ENCODE measurements at regions of chr1 and their contacts with region 1.

Region 1: GRCh38 chr1:152047730-152048402 is 11.1 kb upstream of the S100A11 start:
- DNase-seq: peak; percentile 99
- H3K4me3 ChIP-seq: peak overlapping the region; percentile 6 to 37 (median 25)
- H3K27ac ChIP-seq: peak overlapping the region; percentile 98
- H3K4me1 ChIP-seq: peaks cover 74% of the 10 kb centered on the region
- H3K27me3 ChIP-seq: no peaks in the 10 kb centered on the region
- CTCF ChIP-seq: peak; percentile 27 to 46

Region 2: GRCh38 chr1:151993654-151994496 is 54.0 kb before region 1 on chr1 and contains the start of gene S100A10:
- CTCF ChIA-PET with region 1: no interaction called
- dilution Hi-C with region 1: no loop called
- in situ Hi-C with region 1: no loop called
- intact Hi-C with region 1: loop called (anchors 2 kb)
- DNase-seq: peak; percentile 95
- H3K4me3 ChIP-seq: peak within 1 kb of the TSS; percentile 54 to 93 (median 89)
- H3K27ac ChIP-seq: peak within 1 kb of the TSS; percentile 97
- H3K4me1 ChIP-seq: peaks cover 66% of the 10 kb centered on the region
- H3K27me3 ChIP-seq: no peaks in the 10 kb centered on the region
- CTCF ChIP-seq: no peak
- total RNA-seq, gene S100A10: 213 to 2,371 TPM

Region 3: DNA sequence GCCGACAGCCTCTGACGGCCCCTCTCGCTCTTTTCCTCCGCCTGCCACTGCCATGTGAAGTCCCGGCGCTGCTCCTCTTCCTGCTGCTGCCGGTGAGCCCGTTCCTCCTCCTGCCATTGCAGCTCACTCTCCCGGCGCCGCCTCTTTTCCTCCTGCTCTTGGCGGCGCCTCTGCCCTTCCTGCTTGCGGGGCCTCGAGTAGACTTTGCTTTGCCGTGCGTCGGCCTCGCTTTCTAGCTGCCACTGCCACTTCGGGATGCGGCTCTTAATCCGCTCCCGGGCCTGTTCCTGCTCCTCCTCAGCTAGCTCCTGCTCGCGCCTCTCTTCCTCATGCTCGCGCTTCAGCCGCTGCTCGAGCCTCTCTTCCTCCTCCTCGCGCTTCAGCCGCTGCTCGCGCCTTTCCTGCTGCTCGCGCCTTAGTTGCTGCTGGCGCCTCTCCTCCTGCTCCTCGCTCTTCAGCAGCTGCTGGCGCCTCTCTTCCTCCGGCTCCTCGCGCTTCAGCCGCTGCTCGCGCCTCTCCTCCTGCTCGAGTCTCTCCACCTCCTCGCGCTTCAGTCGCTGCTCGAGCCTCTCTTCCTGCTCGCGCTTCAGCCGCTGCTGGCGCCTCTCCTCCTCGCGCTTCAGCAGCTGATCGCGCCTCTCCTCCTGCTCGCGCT is 63.1 kb after region 1 on chr1:
- CTCF ChIA-PET with region 1: no interaction called
- dilution Hi-C with region 1: no loop called
- in situ Hi-C with region 1: no loop called
- intact Hi-C with region 1: loop called (anchors 1 kb)
- DNase-seq: peak; percentile 71
- H3K4me3 ChIP-seq: peak overlapping the region; percentile 54 to 65 (median 55)
- H3K27ac ChIP-seq: no peak overlapping the region
- H3K4me1 ChIP-seq: peaks cover 51% of the 10 kb centered on the region
- H3K27me3 ChIP-seq: peaks cover 29% of the 10 kb centered on the region
- CTCF ChIP-seq: no peak

Region 4: GRCh38 chr1:152167835-152168519 is 120.1 kb after region 1 on chr1:
- CTCF ChIA-PET with region 1: no interaction called
- dilution Hi-C with region 1: loop called (anchors 5 kb)
- in situ Hi-C with region 1: no loop called
- intact Hi-C with region 1: loop called (anchors 1 kb)
- DNase-seq: peak; percentile 99
- H3K4me3 ChIP-seq: no peak overlapping the region
- H3K27ac ChIP-seq: peak overlapping the region; percentile 68
- H3K4me1 ChIP-seq: peaks cover 42% of the 10 kb centered on the region
- H3K27me3 ChIP-seq: no peaks in the 10 kb centered on the region
- CTCF ChIP-seq: no peak

Region 5: DNA sequence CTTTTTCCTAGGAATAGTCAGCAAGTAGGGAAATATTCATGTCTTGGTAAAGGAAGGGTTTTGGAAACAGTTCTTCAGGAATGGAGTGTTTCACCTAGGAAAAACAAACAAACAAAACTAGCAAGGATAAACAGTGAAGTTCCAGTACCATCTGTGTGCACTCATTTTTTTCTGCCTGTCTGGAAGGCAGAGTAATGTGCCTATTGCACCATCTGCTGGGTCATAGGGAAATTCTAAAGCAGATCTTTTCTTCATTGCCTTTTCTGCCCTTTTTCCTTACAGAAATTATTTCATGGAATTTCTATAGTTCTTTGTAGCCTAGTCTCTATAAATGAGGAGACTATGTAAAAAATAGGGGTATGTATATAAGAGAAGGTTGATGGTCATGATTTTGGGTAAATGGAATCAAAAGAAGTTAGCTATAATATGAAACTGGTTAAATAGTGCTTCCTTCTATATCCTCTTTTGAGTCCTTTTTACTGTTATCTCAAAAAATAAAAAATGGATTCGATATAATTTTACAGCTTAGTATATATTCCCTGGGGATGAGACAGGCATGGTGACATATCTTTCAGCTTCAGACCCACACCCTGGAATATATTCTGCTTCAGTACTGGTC is 179.6 kb after region 1 on chr1:
- CTCF ChIA-PET with region 1: no interaction called
- dilution Hi-C with region 1: no loop called
- in situ Hi-C with region 1: no loop called
- intact Hi-C with region 1: loop called (anchors 1 kb)
- DNase-seq: peak; percentile 42
- H3K4me3 ChIP-seq: no peak overlapping the region
- H3K27ac ChIP-seq: no peak overlapping the region
- H3K4me1 ChIP-seq: peaks cover 34% of the 10 kb centered on the region
- H3K27me3 ChIP-seq: no peaks in the 10 kb centered on the region
- CTCF ChIP-seq: peak; percentile 7 to 41

Region 6: DNA sequence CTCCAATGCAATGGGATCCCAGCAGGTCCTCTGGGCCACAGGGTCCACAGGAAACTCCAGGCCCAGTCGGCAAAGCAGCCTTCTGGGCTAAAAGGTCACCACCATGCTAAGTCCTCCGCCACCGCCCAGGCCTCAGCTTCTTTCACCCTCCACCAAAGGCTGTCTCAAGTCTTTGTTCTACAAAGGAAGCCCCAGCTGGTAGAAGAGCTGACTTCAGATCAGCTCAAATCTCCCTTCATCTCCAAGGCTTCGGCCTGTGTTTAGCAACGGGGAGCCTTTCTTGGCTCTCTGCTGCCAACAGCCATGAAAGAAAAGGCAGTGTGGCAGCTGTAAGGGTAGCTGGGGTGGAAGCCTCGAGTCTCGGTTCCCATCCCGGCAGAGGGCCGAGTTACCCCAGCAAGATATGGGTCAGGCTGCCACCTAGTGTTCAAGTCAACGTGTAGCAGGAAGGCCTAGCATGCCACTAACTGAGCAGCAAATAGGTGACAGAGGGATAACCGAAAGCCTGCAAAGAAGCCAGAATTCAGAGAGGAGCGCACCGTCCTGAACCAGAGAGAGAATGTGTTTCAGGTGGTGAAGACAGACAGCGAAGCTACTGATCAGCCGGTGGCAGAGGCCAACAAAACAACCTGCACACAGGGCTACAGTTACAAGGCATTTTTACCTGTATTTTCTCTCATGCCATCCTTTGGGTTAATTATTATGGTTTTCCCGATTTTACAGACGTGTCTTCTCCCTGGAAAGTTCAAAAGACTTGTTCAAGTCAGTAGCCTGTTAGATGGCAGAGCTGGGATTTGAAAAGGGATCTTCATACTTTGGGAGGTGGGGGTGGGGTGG is 393.0 kb after region 1 on chr1:
- CTCF ChIA-PET with region 1: no interaction called
- dilution Hi-C with region 1: no loop called
- in situ Hi-C with region 1: no loop called
- intact Hi-C with region 1: loop called (anchors 5 kb)
- DNase-seq: peak; percentile 68
- H3K4me3 ChIP-seq: no peak overlapping the region
- H3K27ac ChIP-seq: no peak overlapping the region
- H3K4me1 ChIP-seq: peaks cover 34% of the 10 kb centered on the region
- H3K27me3 ChIP-seq: no peaks in the 10 kb centered on the region
- CTCF ChIP-seq: peak; percentile 91 to 92